Heart right ventricle (tissue), 16 donors: ENCODE measurements at regions of chr6 and their contacts with region 1.

Region 1: GRCh38 chr6:24720604-24721460 is 1.9 kb upstream of the C6orf62 start:
- DNase-seq: peak; percentile 100
- ATAC-seq: peak; percentile 93 to 97 (median 96)
- H3K4me3 ChIP-seq: peak overlapping the region; percentile 70 to 98 (median 86)
- H3K27ac ChIP-seq: peak overlapping the region; percentile 97 to 100 (median 99)
- H3K4me1 ChIP-seq: peaks cover 6 to 44% (median 33%) of the 10 kb centered on the region in 9 donors
- H3K27me3 ChIP-seq: no peaks in the 10 kb centered on the region
- CTCF ChIP-seq: no peak

Region 2: GRCh38 chr6:24492475-24492874 is 228.4 kb before region 1 on chr6:
- intact Hi-C with region 1: no loop called
- DNase-seq: no peak
- ATAC-seq: no peak
- H3K4me3 ChIP-seq: no peak overlapping the region
- H3K27ac ChIP-seq: no peak overlapping the region
- H3K4me1 ChIP-seq: peaks cover 0 to 24% (median 19%) of the 10 kb centered on the region in 9 donors
- H3K27me3 ChIP-seq: peaks cover 0 to 15% (median 0%) of the 10 kb centered on the region in 7 donors
- CTCF ChIP-seq: peak in 4 of 9 donors; percentile 17 to 40 (median 28)

Region 3: GRCh38 chr6:24666641-24667377 is 54.0 kb before region 1 on chr6 and contains the starts of genes ACOT13 and TDP2:
- intact Hi-C with region 1: loop called in 3 of 10 experiments (anchors 1 to 2 kb)
- DNase-seq: peak; percentile 95 to 97
- ATAC-seq: peak; percentile 99 to 100 (median 100)
- H3K4me3 ChIP-seq: peak within 1 kb of the TSS; percentile 59 to 99 (median 89)
- H3K27ac ChIP-seq: peak within 1 kb of the TSS; percentile 63 to 96 (median 92)
- H3K4me1 ChIP-seq: peaks cover 3 to 43% (median 28%) of the 10 kb centered on the region in 9 donors
- H3K27me3 ChIP-seq: no peaks in the 10 kb centered on the region
- CTCF ChIP-seq: peak; percentile 10 to 71 (median 60)
- total RNA-seq, gene ACOT13: 47.3 to 83.8 (median 56.1) TPM
- total RNA-seq, gene TDP2: 20.0 to 30.9 (median 24.3) TPM

Region 4: DNA sequence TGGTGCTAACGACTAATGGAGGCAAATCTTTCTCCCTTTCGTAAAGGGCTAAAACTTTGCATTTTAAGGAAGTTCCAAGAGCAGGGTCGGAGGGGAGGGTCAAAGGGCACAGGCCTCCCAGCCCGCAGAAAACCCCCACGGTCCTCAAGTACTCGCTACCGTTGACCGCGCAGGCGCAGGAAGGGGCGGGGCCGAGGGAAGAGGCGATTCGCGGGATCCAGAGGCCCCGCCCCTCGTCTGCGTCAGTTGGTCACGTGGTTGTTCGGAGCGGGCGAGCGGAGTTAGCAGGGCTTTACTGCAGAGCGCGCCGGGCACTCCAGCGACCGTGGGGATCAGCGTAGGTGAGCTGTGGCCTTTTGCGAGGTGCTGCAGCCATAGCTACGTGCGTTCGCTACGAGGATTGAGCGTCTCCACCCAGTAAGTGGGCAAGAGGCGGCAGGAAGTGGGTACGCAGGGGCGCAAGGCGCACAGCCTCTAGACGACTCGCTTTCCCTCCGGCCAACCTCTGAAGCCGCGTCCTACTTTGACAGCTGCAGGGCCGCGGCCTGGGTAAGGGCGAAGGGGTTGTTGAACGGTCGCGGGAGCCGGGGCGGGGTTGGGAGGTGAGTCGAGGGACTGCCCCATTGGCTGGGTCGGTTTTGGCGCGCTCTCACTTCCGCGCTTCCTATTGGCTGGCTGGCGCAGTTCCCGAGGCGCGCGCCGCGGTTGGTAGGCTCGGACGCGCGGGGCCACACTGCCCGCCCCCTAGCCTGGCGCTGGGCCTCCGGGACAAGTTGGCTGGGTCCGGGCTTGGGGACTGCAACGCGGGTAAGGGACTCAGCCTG is 54.1 kb after region 1 on chr6 and contains the start of gene GMNN:
- intact Hi-C with region 1: loop called in 8 of 10 experiments (anchors 1 to 10 kb)
- DNase-seq: peak; percentile 99
- ATAC-seq: peak; percentile 97 to 100 (median 99)
- H3K4me3 ChIP-seq: peak within 1 kb of the TSS; percentile 82 to 98 (median 91)
- H3K27ac ChIP-seq: peak within 1 kb of the TSS; percentile 38 to 95 (median 91)
- H3K4me1 ChIP-seq: peaks cover 0 to 41% (median 10%) of the 10 kb centered on the region in 9 donors
- H3K27me3 ChIP-seq: no peaks in the 10 kb centered on the region
- CTCF ChIP-seq: peak in 1 of 9 donors; percentile 13
- total RNA-seq, gene GMNN: 3.1 to 10.9 (median 6.8) TPM

Region 5: DNA sequence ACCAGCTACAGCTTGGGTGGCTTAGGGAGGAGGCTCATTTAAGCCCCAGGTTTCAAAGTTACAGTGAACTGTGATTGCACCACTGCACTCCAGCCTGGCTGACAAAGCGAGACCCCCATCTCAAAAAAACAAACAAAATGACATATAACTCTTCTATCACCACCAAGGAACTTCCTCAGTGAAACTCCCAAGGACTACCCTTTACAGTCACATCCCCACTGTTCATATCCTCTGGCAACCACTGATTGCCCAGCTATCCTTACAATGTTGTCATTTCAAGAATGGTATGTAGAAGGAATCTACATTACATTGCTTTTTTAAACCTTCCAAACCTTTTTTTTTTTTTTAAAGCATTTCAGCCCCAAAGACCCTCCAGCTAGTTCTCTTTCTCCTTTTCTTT is 435.3 kb after region 1 on chr6:
- intact Hi-C with region 1: no loop called
- DNase-seq: no peak
- ATAC-seq: no peak
- H3K4me3 ChIP-seq: no peak overlapping the region
- H3K27ac ChIP-seq: no peak overlapping the region
- H3K4me1 ChIP-seq: no peaks in the 10 kb centered on the region
- H3K27me3 ChIP-seq: no peaks in the 10 kb centered on the region
- CTCF ChIP-seq: no peak

Region 6: DNA sequence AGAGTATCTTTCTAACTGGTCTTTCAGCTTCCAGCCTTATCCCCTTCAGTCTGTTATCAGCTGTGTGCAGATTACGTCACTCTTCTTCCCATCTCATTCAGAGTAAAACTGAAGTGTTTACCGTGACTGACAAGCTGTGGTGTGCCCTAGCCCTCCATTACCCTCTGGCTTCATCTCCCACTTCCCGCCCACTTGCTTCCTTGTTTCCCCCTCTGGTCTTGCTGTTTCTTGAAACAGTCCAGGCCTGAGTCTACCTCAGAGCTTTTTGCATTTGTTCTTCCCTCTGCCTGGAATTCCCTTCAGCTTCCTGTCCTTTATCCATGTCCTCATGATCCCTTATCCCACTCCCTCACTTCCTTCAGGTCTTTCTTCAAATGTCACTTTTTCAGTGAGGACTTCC is 625.2 kb after region 1 on chr6:
- intact Hi-C with region 1: no loop called
- DNase-seq: no peak
- ATAC-seq: no peak
- H3K4me3 ChIP-seq: no peak overlapping the region
- H3K27ac ChIP-seq: no peak overlapping the region
- H3K4me1 ChIP-seq: peaks cover 0 to 16% (median 0%) of the 10 kb centered on the region in 9 donors
- H3K27me3 ChIP-seq: peaks cover 0 to 3% (median 0%) of the 10 kb centered on the region in 7 donors
- CTCF ChIP-seq: no peak